Endothelial cell of umbilical vein (primary cell): ENCODE measurements at regions of chr1 and their contacts with region 1.

Region 1: DNA sequence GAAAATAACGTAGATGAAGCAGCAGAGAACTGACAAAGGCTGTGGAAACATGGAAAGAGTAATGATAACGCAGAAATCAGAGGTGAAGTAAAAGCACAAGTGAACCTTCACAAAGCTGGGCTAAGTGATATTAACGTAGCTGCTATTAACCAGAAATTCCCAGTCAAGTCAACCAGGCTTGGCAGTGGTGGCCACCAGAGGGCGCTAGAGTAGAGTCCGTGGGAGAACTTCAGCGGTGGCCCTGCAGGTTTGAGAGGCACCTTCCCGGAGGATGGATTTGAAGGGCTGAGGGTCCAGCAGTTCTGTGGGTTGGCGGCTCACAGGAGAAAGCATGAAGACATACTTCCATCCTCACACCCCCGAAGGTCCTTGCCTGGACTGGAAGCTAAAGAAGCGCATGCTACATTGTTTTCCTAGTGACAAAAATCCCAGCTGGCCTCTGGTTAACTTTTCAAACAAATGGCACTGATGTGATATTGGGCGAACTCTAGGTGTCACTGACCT is 81.7 kb upstream of the ZNF648 start:
- DNase-seq: peak; percentile 79
- H3K4me3 ChIP-seq: no peak overlapping the region
- H3K27ac ChIP-seq: no peak overlapping the region
- H3K4me1 ChIP-seq: no peaks in the 10 kb centered on the region
- H3K27me3 ChIP-seq: no peaks in the 10 kb centered on the region
- CTCF ChIP-seq: peak; percentile 84 to 90
- POLR2A ChIP-seq: no peak

Region 2: GRCh38 chr1:181531951-181532600 is 611.1 kb before region 1 on chr1:
- CTCF ChIA-PET with region 1: no interaction called
- POLR2A ChIA-PET with region 1: no interaction called
- dilution Hi-C with region 1: no loop called
- intact Hi-C with region 1: no loop called
- DNase-seq: no peak
- H3K4me3 ChIP-seq: no peak overlapping the region
- H3K27ac ChIP-seq: no peak overlapping the region
- H3K4me1 ChIP-seq: no peaks in the 10 kb centered on the region
- H3K27me3 ChIP-seq: no peaks in the 10 kb centered on the region
- CTCF ChIP-seq: no peak
- POLR2A ChIP-seq: no peak

Region 3: GRCh38 chr1:182129398-182129797 is 13.8 kb before region 1 on chr1:
- CTCF ChIA-PET with region 1: interaction called, 22 read pairs
- POLR2A ChIA-PET with region 1: no interaction called
- dilution Hi-C with region 1: no loop called
- intact Hi-C with region 1: no loop called
- DNase-seq: no peak
- H3K4me3 ChIP-seq: no peak overlapping the region
- H3K27ac ChIP-seq: no peak overlapping the region
- H3K4me1 ChIP-seq: no peaks in the 10 kb centered on the region
- H3K27me3 ChIP-seq: no peaks in the 10 kb centered on the region
- CTCF ChIP-seq: no peak
- POLR2A ChIP-seq: no peak

Region 4: GRCh38 chr1:182157187-182157586 is 14.0 kb after region 1 on chr1:
- CTCF ChIA-PET with region 1: interaction called, 14 read pairs
- POLR2A ChIA-PET with region 1: no interaction called
- dilution Hi-C with region 1: no loop called
- intact Hi-C with region 1: no loop called
- DNase-seq: no peak
- H3K4me3 ChIP-seq: no peak overlapping the region
- H3K27ac ChIP-seq: no peak overlapping the region
- H3K4me1 ChIP-seq: no peaks in the 10 kb centered on the region
- H3K27me3 ChIP-seq: no peaks in the 10 kb centered on the region
- CTCF ChIP-seq: no peak
- POLR2A ChIP-seq: no peak

Region 5: GRCh38 chr1:182391362-182392044 is 248.3 kb after region 1 on chr1 and contains the start of gene GLUL:
- CTCF ChIA-PET with region 1: interaction called, 670 read pairs
- POLR2A ChIA-PET with region 1: interaction called, 16 read pairs
- dilution Hi-C with region 1: no loop called
- intact Hi-C with region 1: loop called (anchors 1 kb)
- DNase-seq: peak; percentile 94
- H3K4me3 ChIP-seq: peak within 1 kb of the TSS; percentile 70 to 90 (median 76)
- H3K27ac ChIP-seq: peak within 1 kb of the TSS; percentile 81
- H3K4me1 ChIP-seq: peaks cover 4% of the 10 kb centered on the region
- H3K27me3 ChIP-seq: no peaks in the 10 kb centered on the region
- CTCF ChIP-seq: peak in 1 of 2 donors; percentile 33
- POLR2A ChIP-seq: peak; percentile 99
- total RNA-seq, gene GLUL: 181 and 187 TPM in 2 replicates

Region 6: GRCh38 chr1:182397771-182398393 is 254.7 kb after region 1 on chr1:
- CTCF ChIA-PET with region 1: interaction called, 670 read pairs
- POLR2A ChIA-PET with region 1: interaction called, 3 read pairs
- dilution Hi-C with region 1: no loop called
- intact Hi-C with region 1: loop called (anchors 1 kb)
- DNase-seq: no peak
- H3K4me3 ChIP-seq: no peak overlapping the region
- H3K27ac ChIP-seq: no peak overlapping the region
- H3K4me1 ChIP-seq: no peaks in the 10 kb centered on the region
- H3K27me3 ChIP-seq: no peaks in the 10 kb centered on the region
- CTCF ChIP-seq: no peak
- POLR2A ChIP-seq: no peak

Region 7: DNA sequence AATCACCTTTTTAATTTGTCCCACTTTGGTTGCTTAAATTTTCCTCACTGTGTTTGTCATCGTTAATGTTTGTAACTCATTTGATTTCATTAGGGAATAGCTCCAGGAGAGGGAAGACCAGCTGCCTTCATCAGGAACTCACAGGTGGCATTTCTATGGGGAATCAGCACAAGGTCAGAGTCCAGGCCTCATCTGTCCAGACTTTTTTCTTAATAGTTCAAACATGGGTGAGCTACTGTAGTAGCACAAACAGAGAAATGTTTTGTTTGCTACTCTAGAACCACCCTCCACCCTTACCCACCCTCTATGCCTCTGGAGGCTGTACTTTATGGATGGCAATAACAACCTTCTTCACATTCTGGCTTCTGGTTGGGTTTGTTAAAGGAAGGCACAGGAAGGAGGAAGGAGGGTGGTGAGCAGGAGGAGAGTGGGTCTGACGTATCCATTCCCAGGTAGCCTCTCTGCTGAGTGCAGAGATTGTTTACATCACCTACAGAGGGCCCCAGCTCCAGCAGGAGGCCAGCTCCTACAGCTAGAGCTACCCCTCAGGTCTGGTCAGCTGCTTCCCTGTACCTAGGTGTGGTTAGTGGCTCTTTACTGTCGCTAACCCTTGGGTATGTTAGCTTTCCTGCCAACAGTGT is 265.3 kb after region 1 on chr1:
- CTCF ChIA-PET with region 1: interaction called, 13 read pairs
- POLR2A ChIA-PET with region 1: no interaction called
- dilution Hi-C with region 1: no loop called
- intact Hi-C with region 1: no loop called
- DNase-seq: no peak
- H3K4me3 ChIP-seq: no peak overlapping the region
- H3K27ac ChIP-seq: no peak overlapping the region
- H3K4me1 ChIP-seq: no peaks in the 10 kb centered on the region
- H3K27me3 ChIP-seq: peaks cover 0 to 3% of the 10 kb centered on the region in 2 experiments
- CTCF ChIP-seq: no peak
- POLR2A ChIP-seq: no peak